MCF 10A (cell line): ENCODE measurements at regions of chr4 and their contacts with region 1.

Region 1: GRCh38 chr4:74283614-74284013 is 24.7 kb upstream of the EPGN start:
- DNase-seq: peak; percentile 93
- H3K4me3 Mint-ChIP-seq: peak overlapping the region; percentile 58
- H3K27ac Mint-ChIP-seq: peak overlapping the region; percentile 81
- H3K4me1 Mint-ChIP-seq: peaks cover 21% of the 10 kb centered on the region
- H3K27me3 Mint-ChIP-seq: no peaks in the 10 kb centered on the region
- CTCF ChIP-seq: no peak

Region 2: DNA sequence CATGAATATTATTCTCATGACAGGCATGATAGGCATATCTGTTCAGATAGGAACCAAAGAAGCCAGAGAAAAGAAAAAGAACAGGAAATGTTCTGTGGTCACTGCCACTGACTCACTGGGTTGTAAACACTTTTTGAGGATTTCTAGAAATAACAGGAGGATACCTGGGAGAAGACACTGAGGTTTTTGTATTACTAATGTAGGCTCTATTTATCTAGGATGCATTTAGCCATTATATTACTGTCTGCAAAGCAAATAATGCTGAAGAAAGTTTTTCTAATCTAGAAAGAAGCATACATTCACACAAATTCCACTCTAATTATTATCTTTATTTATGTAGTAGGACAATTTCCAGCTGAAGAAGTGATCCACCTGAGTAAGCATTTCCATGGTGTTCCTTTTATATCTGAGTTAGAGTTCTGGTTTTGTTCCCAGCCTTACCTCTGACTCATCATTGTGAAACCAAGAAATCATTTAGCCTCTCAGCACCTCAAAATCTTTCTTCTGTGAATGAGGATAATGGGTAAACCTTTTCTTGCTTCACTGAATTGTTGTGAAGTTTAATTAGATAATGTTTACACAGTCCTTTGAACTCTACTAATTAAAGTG is 15.5 kb before region 1 on chr4:
- CTCF ChIA-PET with region 1: interaction called, 3 read pairs
- POLR2A ChIA-PET with region 1: interaction called, 16 read pairs
- intact Hi-C with region 1: no loop called
- DNase-seq: peak; percentile 85
- H3K4me3 Mint-ChIP-seq: no peak overlapping the region
- H3K27ac Mint-ChIP-seq: peak overlapping the region; percentile 59
- H3K4me1 Mint-ChIP-seq: peaks cover 27% of the 10 kb centered on the region
- H3K27me3 Mint-ChIP-seq: no peaks in the 10 kb centered on the region
- CTCF ChIP-seq: no peak